Heart right ventricle (tissue), 16 donors: ENCODE measurements at regions of chr16 and their contacts with region 1.

Region 1: GRCh38 chr16:49799172-49799571 is 56.7 kb downstream of the ZNF423 start:
- DNase-seq: no peak
- ATAC-seq: no peak
- H3K4me3 ChIP-seq: no peak overlapping the region
- H3K27ac ChIP-seq: no peak overlapping the region
- H3K4me1 ChIP-seq: peaks cover 0 to 10% (median 0%) of the 10 kb centered on the region in 9 donors
- H3K27me3 ChIP-seq: peaks cover 0 to 8% (median 0%) of the 10 kb centered on the region in 7 donors
- CTCF ChIP-seq: no peak

Region 2: DNA sequence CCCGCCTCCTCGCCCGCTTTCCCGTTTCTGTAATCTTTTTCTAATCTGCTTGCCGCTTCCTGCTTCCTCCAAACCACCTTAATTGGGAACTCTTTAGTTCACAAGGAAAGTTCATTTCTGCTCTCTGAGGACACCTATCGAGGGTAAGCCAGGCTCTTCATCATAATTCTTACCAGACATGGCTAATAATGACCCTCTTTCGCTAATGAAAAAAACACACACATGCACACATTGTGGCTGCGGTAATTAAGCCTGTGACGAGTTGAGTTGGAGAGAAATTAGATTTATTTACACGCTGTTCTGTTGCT is 43.9 kb before region 1 on chr16:
- intact Hi-C with region 1: no loop called
- DNase-seq: peak in 1 of 2 donors; percentile 30
- ATAC-seq: peak; percentile 51 to 89 (median 77)
- H3K4me3 ChIP-seq: peak overlapping the region in 9 of 10 donors; percentile 30 to 56 (median 44)
- H3K27ac ChIP-seq: peak overlapping the region; percentile 43 to 90 (median 84)
- H3K4me1 ChIP-seq: peaks cover 2 to 51% (median 40%) of the 10 kb centered on the region in 9 donors
- H3K27me3 ChIP-seq: peaks cover 0 to 13% (median 0%) of the 10 kb centered on the region in 7 donors
- CTCF ChIP-seq: peak; percentile 20 to 74 (median 51)

Region 3: DNA sequence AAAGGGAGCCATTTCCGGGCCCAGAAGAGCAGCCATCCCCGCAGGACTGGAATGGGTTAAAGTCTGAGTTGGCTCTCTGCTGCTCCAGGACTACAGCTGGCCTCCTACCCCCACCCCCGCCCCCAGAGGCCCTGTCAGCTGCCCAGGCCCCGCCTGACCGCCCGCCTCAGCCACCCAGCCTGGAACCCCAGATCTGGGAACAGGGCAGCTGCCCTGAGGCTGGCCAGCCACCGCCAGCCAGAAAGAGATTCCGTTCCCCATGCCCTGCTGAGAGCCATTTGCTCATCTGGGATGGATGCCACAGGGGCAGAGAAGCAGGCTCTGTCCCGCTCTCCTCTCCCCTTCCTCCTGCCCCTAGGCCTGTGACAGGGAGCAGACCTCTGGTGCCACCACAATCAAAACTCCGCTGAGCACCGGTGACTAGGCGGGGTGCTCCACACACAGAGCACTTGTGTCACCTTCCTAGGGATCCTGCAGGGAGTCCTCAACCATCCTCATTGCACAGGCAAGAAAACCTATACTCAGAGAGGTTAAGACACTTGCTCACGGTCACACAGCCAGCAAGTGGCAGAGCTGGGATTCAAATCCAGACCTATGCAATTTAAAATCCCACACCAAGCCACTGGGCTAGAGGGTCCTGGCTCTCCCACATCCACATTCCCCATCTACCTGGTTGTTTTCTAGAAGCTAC is 12.6 kb after region 1 on chr16:
- intact Hi-C with region 1: loop called in 1 of 10 experiments (anchors 1 kb)
- DNase-seq: peak in 1 of 2 donors; percentile 51
- ATAC-seq: peak; percentile 52 to 85 (median 70)
- H3K4me3 ChIP-seq: no peak overlapping the region
- H3K27ac ChIP-seq: peak overlapping the region in 4 of 10 donors; percentile 6 to 51 (median 43)
- H3K4me1 ChIP-seq: peaks cover 0 to 56% (median 26%) of the 10 kb centered on the region in 9 donors
- H3K27me3 ChIP-seq: no peaks in the 10 kb centered on the region
- CTCF ChIP-seq: no peak